ENCODE measurements at regions of chr14 and their contacts with region 1.

Region 1: DNA sequence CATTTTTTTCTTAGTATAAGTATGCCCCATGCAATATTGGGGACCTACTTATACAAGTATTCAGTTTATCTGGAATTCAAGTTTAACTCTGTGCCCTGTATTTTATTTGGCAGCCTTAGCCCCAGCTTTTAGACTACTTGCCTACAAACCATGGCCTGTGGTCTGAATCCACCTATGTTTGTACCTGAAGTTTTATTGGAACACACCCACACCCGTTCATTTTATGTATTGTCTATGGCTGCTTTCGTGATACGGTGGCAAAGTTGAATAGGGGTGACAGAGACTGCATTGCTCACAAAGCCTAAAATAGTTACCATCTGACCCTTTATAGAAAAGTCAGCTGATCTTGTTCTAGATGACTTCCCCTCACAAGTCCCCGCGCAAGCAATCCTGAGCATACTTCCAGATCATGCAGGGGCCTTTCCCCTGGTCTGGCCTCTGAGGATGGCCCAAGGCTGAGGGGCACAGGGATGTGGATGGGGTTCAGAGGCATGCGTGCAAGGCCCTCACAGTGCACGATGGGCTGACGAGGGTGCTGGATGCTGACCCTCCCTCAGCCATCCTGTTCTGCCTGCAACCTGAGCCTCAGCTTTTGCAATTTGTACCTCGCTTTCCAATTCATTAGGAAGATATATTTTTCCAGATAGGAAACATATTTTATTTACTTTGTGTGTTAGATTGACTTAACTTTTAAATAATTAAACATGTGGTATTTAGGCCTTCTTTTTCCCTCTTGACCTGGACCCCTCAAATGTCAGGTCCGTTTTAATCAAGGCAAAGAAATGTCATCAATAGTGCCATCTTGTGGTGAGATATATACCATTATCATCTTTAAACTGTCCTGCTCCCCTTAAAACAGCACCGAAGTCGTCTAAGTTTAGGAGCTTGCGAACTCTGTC is 527.3 kb upstream of the CCDC196 start:
- DNase-seq: peak; percentile 38 to 45 (median 39)
- H3K4me3 ChIP-seq: no peak overlapping the region
- H3K27ac ChIP-seq: no peak overlapping the region
- H3K4me1 ChIP-seq: no peaks in the 10 kb centered on the region
- H3K27me3 ChIP-seq: no peaks in the 10 kb centered on the region

Region 2: DNA sequence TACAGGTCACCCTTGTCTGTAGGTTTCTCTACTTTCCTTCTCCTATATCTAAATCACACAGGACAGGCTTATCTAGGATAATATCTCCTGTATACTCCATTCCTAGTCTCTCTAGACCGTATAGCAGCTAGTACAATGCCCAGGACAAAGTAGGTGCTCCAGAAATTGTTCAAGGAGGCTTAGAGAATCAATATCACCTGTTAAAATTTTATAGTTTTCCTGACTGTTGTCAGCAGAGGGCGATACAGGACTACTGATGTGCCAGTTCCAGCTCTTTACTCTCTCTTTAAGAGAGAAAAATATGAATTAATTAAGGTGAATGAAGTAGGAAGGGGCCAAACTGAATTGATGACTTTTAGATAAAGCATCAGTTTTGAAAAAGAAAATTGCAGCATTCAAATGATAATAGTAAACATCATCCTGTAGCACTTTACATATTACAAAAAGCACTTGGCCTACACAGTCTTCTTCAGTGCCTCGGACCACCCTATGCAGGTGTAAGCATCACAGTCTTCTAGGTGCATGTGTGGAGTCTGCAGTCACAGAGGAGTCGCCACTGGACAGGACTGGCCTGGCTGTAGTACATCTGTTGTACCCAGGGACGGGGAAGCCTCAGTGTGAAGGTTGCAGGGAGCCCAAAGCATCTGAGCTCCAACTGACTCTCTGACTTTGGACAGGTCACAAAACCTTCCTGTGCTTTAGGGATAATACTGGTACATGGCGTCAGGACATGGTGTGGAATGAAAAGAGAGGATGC is 794.7 kb before region 1 on chr14:
- CTCF ChIA-PET with region 1: interaction called, 55 read pairs
- POLR2A ChIA-PET with region 1: no interaction called
- DNase-seq: peak; percentile 58 to 78 (median 69)
- H3K4me3 ChIP-seq: no peak overlapping the region
- H3K27ac ChIP-seq: no peak overlapping the region
- H3K4me1 ChIP-seq: no peaks in the 10 kb centered on the region
- H3K27me3 ChIP-seq: no peaks in the 10 kb centered on the region

Region 3: DNA sequence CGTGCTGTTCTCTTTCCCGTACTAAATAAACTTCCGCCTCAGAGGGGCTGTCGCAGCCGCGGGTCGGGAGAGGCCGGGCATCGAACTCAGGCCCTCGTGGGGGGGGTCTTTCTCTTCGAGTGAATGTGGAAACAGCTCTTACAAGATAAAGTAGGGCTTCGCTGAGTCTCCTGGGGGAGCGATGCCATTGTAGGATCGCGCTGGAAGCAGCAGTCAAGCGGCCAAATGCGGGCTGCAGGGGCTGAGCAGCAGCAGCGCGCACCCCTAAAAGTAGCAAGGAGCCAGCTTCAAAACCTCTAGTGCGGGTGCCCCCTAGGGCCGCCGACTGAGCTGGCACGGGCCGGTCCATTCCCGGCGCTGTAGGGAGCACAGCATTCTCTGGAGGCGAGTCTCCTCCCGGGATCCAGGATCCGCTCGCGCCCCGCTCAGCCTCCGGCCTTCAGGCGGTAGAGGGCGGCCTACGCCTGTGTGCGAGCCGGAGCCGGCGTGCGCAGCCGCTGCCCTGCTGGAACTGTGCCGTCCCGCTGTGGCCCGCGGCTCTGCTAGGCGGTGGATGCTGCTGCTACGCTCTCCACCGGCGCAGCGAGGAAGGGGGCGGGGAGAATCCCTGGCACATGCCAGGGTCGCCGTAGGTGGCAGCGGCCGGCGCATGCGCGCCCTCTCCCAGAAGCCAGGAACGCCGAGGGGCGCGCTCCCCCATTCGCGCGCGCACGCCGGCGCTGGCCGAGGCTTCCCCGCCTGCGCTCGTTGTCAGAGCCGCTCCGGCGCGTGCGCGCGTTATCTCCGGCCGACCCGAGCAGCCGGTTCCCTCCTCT is 546.7 kb before region 1 on chr14 and contains the start of gene FUT8:
- CTCF ChIA-PET with region 1: interaction called, 48 read pairs
- POLR2A ChIA-PET with region 1: no interaction called
- DNase-seq: peak; percentile 95 to 98 (median 98)
- H3K4me3 ChIP-seq: peak within 1 kb of the TSS; percentile 80 to 96 (median 90)
- H3K27ac ChIP-seq: peak within 1 kb of the TSS; percentile 49 to 86
- H3K4me1 ChIP-seq: peaks cover 5 to 20% (median 9%) of the 10 kb centered on the region in 4 experiments
- H3K27me3 ChIP-seq: no peaks in the 10 kb centered on the region

Region 4: GRCh38 chr14:65772921-65773574 is 185.9 kb before region 1 on chr14:
- CTCF ChIA-PET with region 1: no interaction called
- POLR2A ChIA-PET with region 1: no interaction called
- DNase-seq: peak; percentile 50 to 77 (median 60)
- H3K4me3 ChIP-seq: no peak overlapping the region
- H3K27ac ChIP-seq: no peak overlapping the region
- H3K4me1 ChIP-seq: peaks cover 2 to 15% (median 14%) of the 10 kb centered on the region in 4 experiments
- H3K27me3 ChIP-seq: peaks cover 0 to 2% (median 1%) of the 10 kb centered on the region in 5 experiments

Region 5: GRCh38 chr14:65810322-65810721 is 148.6 kb before region 1 on chr14:
- CTCF ChIA-PET with region 1: no interaction called
- POLR2A ChIA-PET with region 1: no interaction called
- DNase-seq: no peak
- H3K4me3 ChIP-seq: no peak overlapping the region
- H3K27ac ChIP-seq: no peak overlapping the region
- H3K4me1 ChIP-seq: peaks cover 0 to 5% (median 0%) of the 10 kb centered on the region in 4 experiments
- H3K27me3 ChIP-seq: no peaks in the 10 kb centered on the region

Region 6: DNA sequence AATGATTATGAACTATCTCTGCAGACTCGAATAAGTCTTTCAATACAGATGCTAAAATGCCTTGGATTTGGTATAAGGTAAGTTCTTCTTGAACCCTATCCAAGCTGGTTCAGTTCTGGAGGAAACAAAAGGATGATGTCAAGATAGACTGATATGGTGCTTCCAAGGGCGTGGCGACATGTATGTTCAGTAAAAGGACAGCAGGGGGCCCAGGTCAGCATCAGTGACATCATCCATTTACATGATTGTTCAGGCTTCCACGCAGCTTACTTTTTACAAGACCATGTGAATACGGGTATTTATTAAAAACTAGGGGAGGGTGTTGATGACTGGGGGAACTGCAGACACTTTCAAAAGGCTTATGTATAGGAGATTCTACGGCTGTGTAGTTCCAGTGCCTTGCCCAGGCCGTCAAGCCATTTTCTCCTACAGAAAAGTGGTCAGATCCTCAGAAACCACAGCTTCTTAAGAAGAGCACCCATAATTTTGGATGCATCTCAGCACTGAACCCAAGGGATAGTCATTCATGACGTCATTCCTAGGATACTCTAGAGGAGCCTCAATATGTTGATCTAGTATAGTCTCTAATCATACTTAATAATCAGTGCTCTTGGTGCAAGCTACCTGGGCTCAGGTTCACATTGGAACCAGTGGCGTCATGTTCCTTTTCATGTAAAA is 18.7 kb before region 1 on chr14:
- CTCF ChIA-PET with region 1: interaction called, 43 read pairs
- POLR2A ChIA-PET with region 1: no interaction called
- DNase-seq: peak; percentile 32 to 63 (median 45)
- H3K4me3 ChIP-seq: no peak overlapping the region
- H3K27ac ChIP-seq: no peak overlapping the region
- H3K4me1 ChIP-seq: peaks cover 6 to 19% (median 17%) of the 10 kb centered on the region in 4 experiments
- H3K27me3 ChIP-seq: no peaks in the 10 kb centered on the region

Region 7: GRCh38 chr14:65972891-65973290 is 14.0 kb after region 1 on chr14:
- CTCF ChIA-PET with region 1: interaction called, 19 read pairs
- POLR2A ChIA-PET with region 1: no interaction called
- DNase-seq: no peak
- H3K4me3 ChIP-seq: no peak overlapping the region
- H3K27ac ChIP-seq: no peak overlapping the region
- H3K4me1 ChIP-seq: no peaks in the 10 kb centered on the region
- H3K27me3 ChIP-seq: no peaks in the 10 kb centered on the region

Region 8: GRCh38 chr14:66070509-66071319 is 111.8 kb after region 1 on chr14:
- CTCF ChIA-PET with region 1: interaction called, 46 read pairs
- POLR2A ChIA-PET with region 1: no interaction called
- DNase-seq: peak; percentile 34 to 54 (median 38)
- H3K4me3 ChIP-seq: no peak overlapping the region
- H3K27ac ChIP-seq: no peak overlapping the region
- H3K4me1 ChIP-seq: no peaks in the 10 kb centered on the region
- H3K27me3 ChIP-seq: no peaks in the 10 kb centered on the region

Region 9: GRCh38 chr14:66206554-66206953 is 247.6 kb after region 1 on chr14:
- CTCF ChIA-PET with region 1: no interaction called
- POLR2A ChIA-PET with region 1: no interaction called
- DNase-seq: peak; percentile 6 to 30 (median 21)
- H3K4me3 ChIP-seq: no peak overlapping the region
- H3K27ac ChIP-seq: no peak overlapping the region
- H3K4me1 ChIP-seq: no peaks in the 10 kb centered on the region
- H3K27me3 ChIP-seq: no peaks in the 10 kb centered on the region